CD8-positive, alpha-beta T cell (primary cell): ENCODE measurements at regions of chr14 and their contacts with region 1.

Region 1: DNA sequence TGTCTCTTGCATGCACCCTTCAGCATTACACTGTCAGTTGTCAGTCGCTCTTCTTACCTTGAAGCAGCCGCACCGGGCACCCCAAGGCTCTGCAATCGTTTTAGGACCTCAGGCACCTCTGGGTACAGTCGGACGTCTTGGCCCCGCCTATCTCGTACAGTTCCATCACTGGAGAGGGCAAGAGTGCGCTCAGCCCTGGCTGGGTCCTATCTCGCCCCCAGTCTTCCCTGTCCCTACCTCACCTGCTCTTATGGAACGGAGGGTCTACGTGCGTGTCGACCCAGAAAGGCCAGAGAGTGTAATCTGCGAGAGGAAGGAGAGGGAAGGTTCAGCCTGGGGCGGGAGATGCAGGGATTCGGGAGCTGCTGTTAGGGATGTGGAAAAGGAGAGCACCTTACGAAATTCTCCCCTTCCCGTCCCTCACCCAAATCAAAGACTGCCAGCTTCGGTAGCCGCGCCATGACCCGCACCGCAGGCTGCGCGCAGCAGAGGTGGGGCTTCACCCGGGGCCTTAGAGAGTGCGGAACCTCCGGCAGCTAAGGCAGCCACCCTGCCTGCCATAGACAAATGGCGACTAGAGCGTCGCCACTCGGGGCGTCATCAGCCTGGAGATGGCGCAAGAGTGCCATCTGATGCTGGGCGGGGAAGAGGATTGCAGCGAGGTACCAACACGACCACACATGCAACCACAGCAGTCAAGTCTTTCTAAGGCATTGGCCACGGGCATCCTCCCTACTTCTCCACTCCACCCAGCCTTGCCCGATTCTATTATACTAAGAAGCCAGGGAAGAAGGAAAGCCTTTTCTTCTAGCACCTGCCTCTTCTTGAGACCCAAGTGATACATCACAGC is at the start of gene MDP1:
- DNase-seq: peak; percentile 75 to 96 (median 88)
- ATAC-seq: peak; percentile 72
- H3K4me3 ChIP-seq: peak within 1 kb of the TSS; percentile 86 to 95
- H3K4me3 Mint-ChIP-seq: peak within 1 kb of the TSS; percentile 93
- H3K27ac ChIP-seq: peak within 1 kb of the TSS; percentile 87 to 97
- H3K27ac Mint-ChIP-seq: peak within 1 kb of the TSS; percentile 99
- H3K4me1 ChIP-seq: peaks cover 32% of the 10 kb centered on the region
- H3K4me1 Mint-ChIP-seq: peaks cover 52% of the 10 kb centered on the region
- H3K27me3 ChIP-seq: no peaks in the 10 kb centered on the region
- H3K27me3 Mint-ChIP-seq: no peaks in the 10 kb centered on the region
- CTCF ChIP-seq: peak; percentile 63
- total RNA-seq, gene MDP1: 4.2 to 4.5 TPM

Region 2: GRCh38 chr14:23953464-23954278 is 262.0 kb before region 1 on chr14 and contains the start of gene DHRS4:
- CTCF ChIA-PET with region 1: no interaction called
- POLR2A ChIA-PET with region 1: no interaction called
- intact Hi-C with region 1: loop called in 1 of 2 experiments (anchors 10 kb)
- DNase-seq: peak; percentile 71 to 93 (median 83)
- ATAC-seq: peak; percentile 96
- H3K4me3 ChIP-seq: peak within 1 kb of the TSS; percentile 85 to 90
- H3K4me3 Mint-ChIP-seq: peak within 1 kb of the TSS; percentile 97
- H3K27ac ChIP-seq: peak within 1 kb of the TSS; percentile 49 to 65
- H3K27ac Mint-ChIP-seq: peak within 1 kb of the TSS; percentile 91
- H3K4me1 ChIP-seq: peaks cover 10% of the 10 kb centered on the region
- H3K4me1 Mint-ChIP-seq: peaks cover 32% of the 10 kb centered on the region
- H3K27me3 ChIP-seq: no peaks in the 10 kb centered on the region
- H3K27me3 Mint-ChIP-seq: no peaks in the 10 kb centered on the region
- CTCF ChIP-seq: peak; percentile 90
- total RNA-seq, gene DHRS4: 6.8 to 7.1 TPM

Region 3: GRCh38 chr14:24171422-24172260 is 44.1 kb before region 1 on chr14 and contains the start of gene REC8:
- CTCF ChIA-PET with region 1: interaction called, 3 read pairs
- POLR2A ChIA-PET with region 1: interaction called, 3 read pairs
- intact Hi-C with region 1: loop called in 1 of 2 experiments (anchors 1 kb)
- DNase-seq: peak; percentile 62 to 92 (median 81)
- ATAC-seq: peak; percentile 87
- H3K4me3 ChIP-seq: peak within 1 kb of the TSS; percentile 53 to 60
- H3K4me3 Mint-ChIP-seq: peak within 1 kb of the TSS; percentile 88
- H3K27ac ChIP-seq: peak within 1 kb of the TSS; percentile 17 to 64
- H3K27ac Mint-ChIP-seq: peak within 1 kb of the TSS; percentile 84
- H3K4me1 ChIP-seq: peaks cover 15% of the 10 kb centered on the region
- H3K4me1 Mint-ChIP-seq: peaks cover 26% of the 10 kb centered on the region
- H3K27me3 ChIP-seq: no peaks in the 10 kb centered on the region
- H3K27me3 Mint-ChIP-seq: no peaks in the 10 kb centered on the region
- CTCF ChIP-seq: no peak
- total RNA-seq, gene REC8: 131 to 144 TPM

Region 4: DNA sequence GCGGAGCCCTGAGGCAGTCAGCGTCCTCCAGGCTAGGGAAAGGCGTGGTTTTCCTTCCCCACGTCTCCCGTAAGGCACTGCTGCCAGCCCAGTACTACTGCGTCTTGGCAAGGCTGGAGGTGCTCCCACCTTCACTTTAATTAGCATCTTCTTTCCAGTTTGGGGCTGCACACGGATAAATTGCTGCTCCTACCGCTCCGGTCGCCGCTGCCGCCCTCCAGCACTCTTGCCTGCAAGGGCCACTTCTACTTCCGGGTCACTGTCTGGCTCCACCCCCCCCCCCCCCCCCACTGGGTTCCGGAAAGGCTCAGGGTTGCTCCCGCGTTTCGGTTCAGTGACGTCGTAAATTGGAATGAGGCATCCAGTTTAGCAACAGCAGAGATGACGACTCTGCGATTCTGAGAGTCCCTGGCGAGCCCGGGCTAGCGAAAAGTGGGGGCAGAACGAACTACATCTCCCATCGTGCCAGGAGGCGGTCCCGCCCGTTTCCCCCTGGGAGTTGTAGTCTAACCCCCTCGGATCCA is 16.5 kb after region 1 on chr14 and contains the start of gene NEDD8:
- CTCF ChIA-PET with region 1: interaction called, 6 read pairs
- POLR2A ChIA-PET with region 1: interaction called, 4 read pairs
- intact Hi-C with region 1: loop called (anchors 1 kb)
- DNase-seq: peak; percentile 72 to 93 (median 89)
- ATAC-seq: peak; percentile 88
- H3K4me3 ChIP-seq: peak within 1 kb of the TSS; percentile 92 to 98
- H3K4me3 Mint-ChIP-seq: peak within 1 kb of the TSS; percentile 97
- H3K27ac ChIP-seq: peak within 1 kb of the TSS; percentile 72 to 87
- H3K27ac Mint-ChIP-seq: peak within 1 kb of the TSS; percentile 97
- H3K4me1 ChIP-seq: peaks cover 27% of the 10 kb centered on the region
- H3K4me1 Mint-ChIP-seq: peaks cover 59% of the 10 kb centered on the region
- H3K27me3 ChIP-seq: no peaks in the 10 kb centered on the region
- H3K27me3 Mint-ChIP-seq: no peaks in the 10 kb centered on the region
- CTCF ChIP-seq: no peak
- total RNA-seq, gene NEDD8: 39.9 to 48.5 TPM

Region 5: DNA sequence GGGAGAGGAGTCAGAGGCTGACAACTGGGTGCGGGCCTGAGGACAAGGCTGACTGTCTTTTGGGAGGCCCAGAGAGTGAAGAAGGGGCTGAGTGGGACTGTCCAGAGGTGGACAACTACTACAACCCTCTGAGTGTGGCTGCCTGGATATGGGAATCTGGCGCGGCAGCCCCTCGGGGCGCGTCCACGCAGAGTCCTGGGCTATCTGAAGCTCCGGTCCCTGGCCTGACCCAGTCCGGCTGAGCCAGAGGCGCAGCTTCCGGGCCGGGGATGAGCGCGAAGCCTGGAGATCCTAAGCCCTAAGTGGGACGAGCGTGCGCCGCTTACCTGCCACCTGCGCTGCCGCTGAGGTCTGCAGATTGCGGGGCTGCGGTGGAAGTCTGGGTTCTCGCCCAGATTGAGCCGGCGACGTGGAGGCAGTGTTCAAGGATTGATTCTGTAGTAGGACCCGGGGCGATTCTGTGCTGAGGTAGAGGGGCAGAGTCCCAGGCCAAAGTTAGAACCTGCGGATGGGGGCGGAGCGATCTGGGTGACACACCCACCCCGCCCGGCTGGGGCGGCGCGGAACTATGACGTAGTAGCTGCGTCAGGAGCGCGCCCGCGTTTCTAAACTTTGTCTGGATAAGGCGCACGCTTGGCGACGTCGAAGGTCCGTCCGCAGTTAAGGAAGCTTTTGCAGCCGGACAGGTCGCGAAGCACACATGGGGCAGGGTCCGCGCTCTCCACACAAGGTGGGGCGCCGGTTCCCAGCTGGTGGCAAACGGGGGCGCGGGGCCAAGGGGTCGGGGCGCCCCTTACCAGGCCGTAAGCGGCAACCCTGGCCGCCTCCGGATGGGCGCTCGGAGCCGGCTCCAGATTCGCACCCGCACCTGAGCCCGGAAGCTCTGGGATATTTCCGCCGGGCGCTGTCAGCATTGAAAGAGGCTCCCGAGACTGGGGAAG is 83.8 kb after region 1 on chr14 and contains the starts of genes DHRS1 and NOP9:
- CTCF ChIA-PET with region 1: interaction called, 18 read pairs
- POLR2A ChIA-PET with region 1: interaction called, 4 read pairs
- intact Hi-C with region 1: loop called (anchors 1 kb)
- DNase-seq: peak; percentile 82 to 98 (median 92)
- ATAC-seq: peak; percentile 78
- H3K4me3 ChIP-seq: peak within 1 kb of the TSS; percentile 80 to 83
- H3K4me3 Mint-ChIP-seq: peak within 1 kb of the TSS; percentile 94
- H3K27ac ChIP-seq: peak within 1 kb of the TSS; percentile 80 to 85
- H3K27ac Mint-ChIP-seq: peak within 1 kb of the TSS; percentile 96
- H3K4me1 ChIP-seq: peaks cover 28% of the 10 kb centered on the region
- H3K4me1 Mint-ChIP-seq: peaks cover 51% of the 10 kb centered on the region
- H3K27me3 ChIP-seq: no peaks in the 10 kb centered on the region
- H3K27me3 Mint-ChIP-seq: no peaks in the 10 kb centered on the region
- CTCF ChIP-seq: no peak
- total RNA-seq, gene DHRS1: 24.3 to 28.5 TPM
- total RNA-seq, gene NOP9: 35.6 to 35.8 TPM

Region 6: DNA sequence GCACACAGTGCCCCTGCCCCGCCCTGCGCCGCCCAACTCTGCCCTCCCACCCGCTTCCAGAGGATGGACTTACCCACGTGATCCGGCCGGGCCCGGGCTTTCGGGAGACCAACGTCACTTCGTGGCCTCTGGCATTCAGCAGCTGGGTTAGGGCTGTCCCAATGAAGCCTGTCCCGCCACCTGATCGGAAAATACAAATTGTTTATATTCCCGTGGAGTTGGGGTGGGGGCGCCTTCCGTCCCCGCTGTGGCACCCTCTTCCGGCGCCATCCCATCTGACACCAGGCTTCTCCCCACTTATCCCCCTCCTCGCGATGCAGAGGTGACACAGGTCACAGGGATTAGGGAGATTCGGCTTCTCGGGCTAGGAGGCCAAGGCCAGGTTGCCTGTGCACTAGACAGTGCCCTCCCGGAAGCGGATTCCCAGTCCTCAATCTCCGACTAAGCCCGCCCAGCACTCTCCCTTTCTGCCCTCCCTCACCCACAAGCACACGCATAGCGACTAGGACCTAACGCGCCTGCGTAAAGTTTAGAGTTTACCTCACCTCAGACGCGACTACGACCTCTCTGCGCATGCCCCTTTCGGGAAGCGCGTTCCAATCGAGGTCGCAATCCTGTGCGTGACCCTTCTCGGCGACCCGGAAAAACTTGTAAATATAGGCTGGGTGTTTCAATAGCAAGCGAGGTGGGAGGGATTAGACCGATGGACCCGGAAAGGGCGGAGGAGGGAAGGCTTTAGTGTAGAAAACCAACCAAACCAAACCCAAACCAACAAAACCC is 226.7 kb after region 1 on chr14 and contains the start of gene SDR39U1:
- CTCF ChIA-PET with region 1: no interaction called
- POLR2A ChIA-PET with region 1: no interaction called
- intact Hi-C with region 1: loop called in 1 of 2 experiments (anchors 1 kb)
- DNase-seq: peak; percentile 93 to 100 (median 95)
- ATAC-seq: peak; percentile 89
- H3K4me3 ChIP-seq: peak within 1 kb of the TSS; percentile 77 to 89
- H3K4me3 Mint-ChIP-seq: peak within 1 kb of the TSS; percentile 95
- H3K27ac ChIP-seq: peak within 1 kb of the TSS; percentile 96
- H3K27ac Mint-ChIP-seq: peak within 1 kb of the TSS; percentile 97
- H3K4me1 ChIP-seq: peaks cover 35% of the 10 kb centered on the region
- H3K4me1 Mint-ChIP-seq: peaks cover 45% of the 10 kb centered on the region
- H3K27me3 ChIP-seq: no peaks in the 10 kb centered on the region
- H3K27me3 Mint-ChIP-seq: no peaks in the 10 kb centered on the region
- CTCF ChIP-seq: no peak
- total RNA-seq, gene SDR39U1: 75.0 to 84.4 TPM